Pancreas (tissue), 10 donors: ENCODE measurements at regions of chr4 and their contacts with region 1.

Region 1: DNA sequence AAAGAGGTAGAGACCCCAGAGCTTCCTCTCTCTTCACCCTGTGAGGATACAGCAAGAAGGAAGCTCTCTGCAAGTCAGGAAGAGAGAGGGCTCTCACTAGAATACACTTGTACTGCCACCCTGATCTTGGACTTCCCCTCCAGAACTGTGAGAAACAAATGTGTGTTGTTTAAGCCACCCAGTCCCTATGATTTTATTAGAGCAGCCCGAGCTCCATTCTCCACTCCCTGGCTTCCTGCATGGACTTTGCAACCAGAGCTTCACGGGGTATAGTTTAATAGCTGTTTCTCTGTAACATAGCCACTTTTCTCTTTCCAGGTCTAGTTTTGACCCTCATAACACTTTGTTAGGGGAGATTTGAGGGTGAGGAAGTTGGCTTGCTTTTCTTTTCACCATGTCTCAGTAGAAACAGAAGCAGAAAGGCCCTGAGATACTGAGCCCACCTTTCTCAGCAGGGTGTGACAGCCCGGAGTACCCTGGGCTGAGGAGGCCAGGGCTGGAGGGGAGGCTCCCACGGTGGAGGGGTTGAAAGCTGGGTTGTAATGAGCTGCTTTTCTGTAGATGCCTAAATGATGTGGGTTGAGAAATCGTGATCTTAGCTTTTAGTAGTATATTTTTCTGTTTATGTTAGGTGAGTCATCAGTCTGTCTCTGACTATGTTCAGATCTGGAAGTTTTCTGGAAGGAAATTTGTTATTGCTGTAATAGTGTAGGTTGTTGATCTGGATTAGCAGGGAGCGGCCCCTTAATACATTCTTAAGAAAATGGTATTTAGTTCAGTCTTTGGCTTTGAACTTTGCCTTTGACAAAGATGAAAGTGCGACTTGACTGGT is 118.6 kb downstream of the PTTG2 start:
- DNase-seq: no peak
- ATAC-seq: peak in 3 of 4 donors; percentile 29 to 62 (median 37)
- H3K4me3 ChIP-seq: no peak overlapping the region
- H3K27ac ChIP-seq: peak overlapping the region in 2 of 4 donors; percentile 43 to 66
- H3K4me1 ChIP-seq: peaks cover 0 to 16% (median 0%) of the 10 kb centered on the region in 3 donors
- H3K27me3 ChIP-seq: no peaks in the 10 kb centered on the region
- CTCF ChIP-seq: no peak

Region 2: DNA sequence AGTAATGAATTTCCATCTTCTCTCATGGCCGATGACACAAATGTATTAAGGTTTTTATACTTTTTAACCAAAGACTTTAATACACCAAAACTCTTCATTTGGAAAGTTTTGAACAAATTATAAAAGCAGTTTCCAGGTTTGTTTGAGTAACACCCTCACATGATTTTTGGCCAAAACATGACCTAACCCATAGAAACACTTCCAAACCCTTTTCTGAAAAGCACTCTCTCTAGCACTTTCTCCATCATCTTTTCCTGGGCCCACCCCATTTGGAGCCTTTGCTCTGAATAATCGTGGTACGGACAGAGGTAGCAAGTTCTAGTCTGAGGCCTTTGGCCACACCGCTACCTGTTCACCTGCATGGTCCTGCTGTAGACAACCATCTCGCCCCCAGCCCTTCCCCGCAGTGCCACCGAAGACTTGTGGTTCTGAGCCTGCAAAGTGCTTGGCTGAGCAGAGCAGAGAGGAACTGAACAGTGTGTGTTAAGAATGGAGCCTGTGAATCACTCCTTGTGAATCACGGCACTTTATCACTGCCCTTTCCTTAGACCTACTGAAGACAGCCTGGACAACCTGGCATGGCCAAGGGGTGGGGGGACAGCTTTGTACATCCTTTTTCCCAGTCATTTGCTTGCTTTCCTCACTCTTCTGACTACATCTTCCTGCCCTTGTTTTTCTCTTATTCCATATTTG is 63.1 kb after region 1 on chr4:
- intact Hi-C with region 1: loop called in 1 of 3 experiments (anchors 10 kb)
- DNase-seq: no peak
- ATAC-seq: peak in 1 of 4 donors; percentile 22
- H3K4me3 ChIP-seq: no peak overlapping the region
- H3K27ac ChIP-seq: no peak overlapping the region
- H3K4me1 ChIP-seq: peaks cover 18 to 30% (median 27%) of the 10 kb centered on the region in 3 donors
- H3K27me3 ChIP-seq: no peaks in the 10 kb centered on the region
- CTCF ChIP-seq: no peak